ENCODE measurements at regions of chr20 and their contacts with region 1.

Region 1: GRCh38 chr20:3753098-3753980 is 14.2 kb downstream of the ADISSP start:
- DNase-seq: peak; percentile 64
- ATAC-seq: peak; percentile 64 to 65

Region 2: GRCh38 chr20:3543901-3544507 is 209.3 kb before region 1 on chr20:
- intact Hi-C with region 1: no loop called
- DNase-seq: no peak
- ATAC-seq: no peak

Region 3: GRCh38 chr20:3686867-3687321 is 66.4 kb before region 1 on chr20:
- intact Hi-C with region 1: no loop called
- DNase-seq: peak; percentile 86
- ATAC-seq: peak; percentile 88 to 91

Region 4: DNA sequence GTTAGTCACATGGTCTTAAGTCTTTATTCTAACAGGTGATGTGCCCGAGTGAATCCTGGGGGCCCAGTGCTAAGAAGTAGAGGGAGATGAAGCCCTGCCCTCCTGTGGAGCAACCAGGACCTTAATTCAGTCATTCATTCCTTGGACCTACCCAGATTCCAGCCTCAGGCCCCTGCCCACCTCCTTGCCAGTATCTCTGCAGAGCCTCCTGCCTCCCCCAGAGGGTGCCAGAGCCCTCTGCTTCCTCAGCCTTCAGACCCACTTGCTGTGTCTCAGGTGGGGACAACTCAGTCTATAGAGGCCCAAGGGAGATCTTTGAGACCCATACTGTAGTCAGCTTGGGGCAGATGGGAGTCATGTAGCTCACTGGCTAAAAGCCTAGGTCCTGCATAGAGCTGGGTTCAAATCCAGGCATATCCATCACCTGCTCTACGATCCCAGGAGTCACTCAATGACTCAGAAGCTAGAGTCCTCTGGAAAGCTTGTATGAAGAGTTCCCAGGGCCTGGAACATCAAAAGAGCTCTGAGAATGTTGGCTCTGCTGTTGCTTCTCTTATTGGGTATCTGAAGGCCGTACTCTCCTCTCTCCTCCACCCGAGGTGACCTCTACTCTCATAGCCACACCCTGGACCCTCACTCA is 37.0 kb before region 1 on chr20:
- intact Hi-C with region 1: loop called in 1 of 2 experiments (anchors 5 kb)
- DNase-seq: no peak
- ATAC-seq: peak; percentile 60 to 66

Region 5: GRCh38 chr20:3864518-3864917 is 111.2 kb after region 1 on chr20:
- intact Hi-C with region 1: no loop called
- DNase-seq: no peak
- ATAC-seq: no peak